ENCODE measurements at regions of chr12 and their contacts with region 1.

Region 1: DNA sequence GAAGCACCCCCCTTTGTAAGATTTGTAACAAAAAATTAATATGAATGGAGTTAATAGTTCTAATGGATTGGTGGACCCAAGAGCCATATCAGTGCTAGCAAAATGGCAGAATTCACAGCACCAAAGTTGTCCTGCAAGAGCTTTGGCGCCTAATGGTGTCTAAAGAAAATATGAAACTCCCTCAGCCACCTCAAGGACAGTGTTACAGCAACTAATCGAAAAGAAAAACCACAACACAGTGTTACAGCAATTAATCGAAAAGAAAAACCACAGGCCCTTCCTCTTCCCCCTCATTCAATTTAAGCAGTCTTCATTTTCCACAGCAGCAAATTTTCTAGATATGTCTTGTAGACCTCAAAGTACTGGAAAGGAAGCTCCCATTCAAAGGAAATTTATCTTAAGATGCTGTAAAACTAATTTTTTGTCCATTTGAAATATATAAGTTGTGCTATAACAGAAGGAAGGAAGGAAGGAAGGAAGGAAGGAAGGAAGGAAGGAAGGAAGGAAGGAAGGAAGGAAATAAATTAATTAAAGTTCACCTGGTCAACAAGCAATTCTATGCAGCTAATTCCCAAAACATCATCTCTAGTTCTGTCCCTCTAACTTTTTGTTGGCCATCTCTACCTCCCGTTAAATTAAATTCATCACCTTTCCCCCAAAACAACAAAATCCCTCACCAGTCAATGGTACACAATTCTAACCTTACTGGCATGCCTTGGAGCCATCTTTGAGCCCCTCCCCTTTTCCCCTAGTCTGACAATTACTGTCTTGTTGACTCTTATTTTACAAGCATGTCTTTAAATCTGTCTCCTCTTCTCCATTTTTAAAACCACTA is 17.4 kb downstream of the LRP6 start:
- DNase-seq: no peak
- ATAC-seq: no peak
- H3K4me3 ChIP-seq: no peak overlapping the region
- H3K27ac ChIP-seq: no peak overlapping the region
- H3K4me1 ChIP-seq: peaks cover 3% of the 10 kb centered on the region; the same call in 1 of the 2 replicates
- H3K27me3 ChIP-seq: no peaks in the 10 kb centered on the region
- CTCF ChIP-seq: no peak
- POLR2A ChIP-seq: no peak
- RAD21 ChIP-seq: no peak

Region 2: GRCh38 chr12:12207746-12208145 is 41.7 kb before region 1 on chr12:
- CTCF ChIA-PET with region 1: no interaction called
- POLR2A ChIA-PET with region 1: no interaction called
- dilution Hi-C with region 1: no loop called
- in situ Hi-C with region 1: no loop called
- intact Hi-C with region 1: loop called (anchors 5 kb)
- DNase-seq: no peak
- ATAC-seq: no peak
- H3K4me3 ChIP-seq: no peak overlapping the region
- H3K27ac ChIP-seq: no peak overlapping the region
- H3K4me1 ChIP-seq: no peaks in the 10 kb centered on the region
- H3K27me3 ChIP-seq: no peaks in the 10 kb centered on the region
- CTCF ChIP-seq: no peak
- POLR2A ChIP-seq: no peak
- RAD21 ChIP-seq: no peak

Region 3: DNA sequence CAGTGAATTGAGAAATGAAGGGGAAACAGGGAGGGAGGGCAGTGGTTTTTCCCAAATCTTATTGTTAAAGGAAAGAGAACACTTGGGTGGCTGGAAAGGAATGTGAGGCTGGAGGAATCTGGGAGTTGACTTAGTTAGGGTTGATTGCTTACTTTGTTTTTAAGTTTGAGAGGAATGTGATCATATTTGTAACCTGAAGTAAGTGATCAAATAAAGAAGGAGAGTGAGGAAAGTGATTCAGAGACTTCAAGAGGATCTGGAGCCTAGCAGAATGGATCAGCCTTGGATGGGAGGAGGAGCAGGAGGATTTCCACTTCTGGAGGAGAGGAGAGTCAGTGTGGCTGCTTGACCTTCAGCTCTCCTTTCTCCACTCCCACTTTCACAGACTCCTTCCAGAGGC is 23.4 kb after region 1 on chr12:
- CTCF ChIA-PET with region 1: no interaction called
- POLR2A ChIA-PET with region 1: no interaction called
- dilution Hi-C with region 1: no loop called
- in situ Hi-C with region 1: no loop called
- intact Hi-C with region 1: no loop called
- DNase-seq: no peak
- ATAC-seq: peak; percentile 80
- H3K4me3 ChIP-seq: no peak overlapping the region
- H3K27ac ChIP-seq: peak overlapping the region; percentile 60; the same call in 1 of the 2 replicates
- H3K4me1 ChIP-seq: peaks cover 6% of the 10 kb centered on the region
- H3K27me3 ChIP-seq: no peaks in the 10 kb centered on the region
- CTCF ChIP-seq: no peak
- POLR2A ChIP-seq: no peak
- RAD21 ChIP-seq: no peak

Measured in IMR-90 (cell line).